ENCODE measurements at regions of chr19 and their contacts with region 1.

Region 1: GRCh38 chr19:58305065-58305931 is at the start of gene ERVK3-1:
- DNase-seq: peak; percentile 98
- ATAC-seq: peak; percentile 98
- H3K4me3 ChIP-seq: peak within 1 kb of the TSS; percentile 39 to 94 (median 88)
- H3K4me3 Mint-ChIP-seq: peak within 1 kb of the TSS; percentile 97
- H3K27ac ChIP-seq: peak within 1 kb of the TSS; percentile 85 to 93
- H3K27ac Mint-ChIP-seq: peak within 1 kb of the TSS; percentile 97
- H3K4me1 ChIP-seq: peaks cover 15 to 18% of the 10 kb centered on the region in 2 donors
- H3K4me1 Mint-ChIP-seq: peaks cover 36% of the 10 kb centered on the region
- H3K27me3 ChIP-seq: no peaks in the 10 kb centered on the region
- H3K27me3 Mint-ChIP-seq: no peaks in the 10 kb centered on the region
- CTCF ChIP-seq: no peak
- total RNA-seq, gene ERVK3-1: 79.0 and 80.2 TPM in 2 replicates

Region 2: GRCh38 chr19:58091251-58091995 is 213.9 kb before region 1 on chr19:
- CTCF ChIA-PET with region 1: no interaction called
- POLR2A ChIA-PET with region 1: no interaction called
- intact Hi-C with region 1: no loop called
- DNase-seq: no peak
- ATAC-seq: no peak
- H3K4me3 ChIP-seq: no peak overlapping the region
- H3K4me3 Mint-ChIP-seq: no peak overlapping the region
- H3K27ac ChIP-seq: no peak overlapping the region
- H3K27ac Mint-ChIP-seq: no peak overlapping the region
- H3K4me1 ChIP-seq: no peaks in the 10 kb centered on the region
- H3K4me1 Mint-ChIP-seq: peaks cover 2% of the 10 kb centered on the region
- H3K27me3 ChIP-seq: no peaks in the 10 kb centered on the region
- H3K27me3 Mint-ChIP-seq: no peaks in the 10 kb centered on the region
- CTCF ChIP-seq: no peak

Region 3: GRCh38 chr19:58228585-58229254 is 76.6 kb before region 1 on chr19 and contains the start of gene ZNF544:
- CTCF ChIA-PET with region 1: interaction called, 4 read pairs
- POLR2A ChIA-PET with region 1: no interaction called
- intact Hi-C with region 1: loop called (anchors 2 kb)
- DNase-seq: peak; percentile 72
- ATAC-seq: peak; percentile 82
- H3K4me3 ChIP-seq: peak within 1 kb of the TSS; percentile 19 to 91 (median 87)
- H3K4me3 Mint-ChIP-seq: peak within 1 kb of the TSS; percentile 97
- H3K27ac ChIP-seq: peak within 1 kb of the TSS; percentile 19 to 73
- H3K27ac Mint-ChIP-seq: peak within 1 kb of the TSS; percentile 91
- H3K4me1 ChIP-seq: peaks cover 11 to 24% of the 10 kb centered on the region in 2 donors
- H3K4me1 Mint-ChIP-seq: peaks cover 29% of the 10 kb centered on the region
- H3K27me3 ChIP-seq: no peaks in the 10 kb centered on the region
- H3K27me3 Mint-ChIP-seq: no peaks in the 10 kb centered on the region
- CTCF ChIP-seq: peak; percentile 22
- total RNA-seq, gene ZNF544: 65.7 and 75.2 TPM in 2 replicates

Region 4: DNA sequence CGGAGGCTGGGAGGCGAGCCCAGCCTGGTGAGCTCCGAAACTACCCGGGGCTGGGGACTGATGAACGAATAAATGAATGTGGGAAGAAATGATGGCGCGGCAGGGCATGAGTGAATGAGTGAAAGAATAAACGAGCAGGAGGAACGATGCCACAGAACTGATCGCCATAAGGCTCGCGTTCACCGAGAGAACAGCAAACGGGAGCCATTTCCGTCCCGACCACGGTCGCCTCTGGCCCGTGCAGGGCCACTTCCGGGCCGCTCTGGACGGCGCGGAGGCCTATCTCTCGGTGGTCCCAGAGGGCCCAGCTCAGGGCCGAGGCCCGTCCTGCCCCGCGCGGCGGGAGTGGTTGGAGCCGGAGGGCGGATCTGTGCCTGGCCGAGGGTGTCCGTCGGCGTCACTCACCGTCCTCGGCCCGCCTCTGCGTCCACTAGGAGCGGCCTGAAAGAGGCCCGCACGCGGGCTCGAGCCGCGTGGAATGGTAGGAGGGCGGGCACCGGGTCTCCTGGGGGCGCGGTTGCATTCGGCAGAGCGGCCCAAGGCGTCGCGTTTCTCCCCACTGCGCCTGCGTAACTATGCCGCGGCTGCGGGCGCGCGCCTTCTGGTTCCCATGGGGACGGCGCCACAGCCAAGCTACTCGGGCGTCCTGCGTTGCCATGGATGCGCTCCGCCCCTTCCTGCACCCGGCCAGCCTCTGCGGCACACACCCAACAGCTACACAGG is 57.1 kb after region 1 on chr19 and contains the start of gene ZNF497:
- CTCF ChIA-PET with region 1: no interaction called
- POLR2A ChIA-PET with region 1: interaction called, 12 read pairs
- intact Hi-C with region 1: loop called (anchors 1 kb)
- DNase-seq: peak; percentile 99
- ATAC-seq: peak; percentile 83
- H3K4me3 ChIP-seq: peak within 1 kb of the TSS; percentile 69 to 90 (median 74)
- H3K4me3 Mint-ChIP-seq: peak within 1 kb of the TSS; percentile 95
- H3K27ac ChIP-seq: peak within 1 kb of the TSS; percentile 80 to 81
- H3K27ac Mint-ChIP-seq: peak within 1 kb of the TSS; percentile 97
- H3K4me1 ChIP-seq: peaks cover 11 to 30% of the 10 kb centered on the region in 2 donors
- H3K4me1 Mint-ChIP-seq: peaks cover 17% of the 10 kb centered on the region
- H3K27me3 ChIP-seq: peaks cover 0 to 13% (median 5%) of the 10 kb centered on the region in 4 experiments
- H3K27me3 Mint-ChIP-seq: peaks cover 3% of the 10 kb centered on the region
- CTCF ChIP-seq: no peak
- total RNA-seq, gene ZNF497: 2.7 and 4.4 TPM in 2 replicates

Region 5: GRCh38 chr19:58400916-58401839 is 95.9 kb after region 1 on chr19:
- CTCF ChIA-PET with region 1: no interaction called
- POLR2A ChIA-PET with region 1: no interaction called
- intact Hi-C with region 1: loop called (anchors 1 kb)
- DNase-seq: peak; percentile 100
- ATAC-seq: peak; percentile 97
- H3K4me3 ChIP-seq: peak overlapping the region; percentile 32 to 69 (median 64)
- H3K4me3 Mint-ChIP-seq: peak overlapping the region; percentile 89
- H3K27ac ChIP-seq: peak overlapping the region; percentile 62 to 87
- H3K27ac Mint-ChIP-seq: peak overlapping the region; percentile 91
- H3K4me1 ChIP-seq: peaks cover 7 to 15% of the 10 kb centered on the region in 2 donors
- H3K4me1 Mint-ChIP-seq: peaks cover 7% of the 10 kb centered on the region
- H3K27me3 ChIP-seq: peaks cover 0 to 19% (median 7%) of the 10 kb centered on the region in 4 experiments
- H3K27me3 Mint-ChIP-seq: peaks cover 3% of the 10 kb centered on the region
- CTCF ChIP-seq: no peak

Region 6: DNA sequence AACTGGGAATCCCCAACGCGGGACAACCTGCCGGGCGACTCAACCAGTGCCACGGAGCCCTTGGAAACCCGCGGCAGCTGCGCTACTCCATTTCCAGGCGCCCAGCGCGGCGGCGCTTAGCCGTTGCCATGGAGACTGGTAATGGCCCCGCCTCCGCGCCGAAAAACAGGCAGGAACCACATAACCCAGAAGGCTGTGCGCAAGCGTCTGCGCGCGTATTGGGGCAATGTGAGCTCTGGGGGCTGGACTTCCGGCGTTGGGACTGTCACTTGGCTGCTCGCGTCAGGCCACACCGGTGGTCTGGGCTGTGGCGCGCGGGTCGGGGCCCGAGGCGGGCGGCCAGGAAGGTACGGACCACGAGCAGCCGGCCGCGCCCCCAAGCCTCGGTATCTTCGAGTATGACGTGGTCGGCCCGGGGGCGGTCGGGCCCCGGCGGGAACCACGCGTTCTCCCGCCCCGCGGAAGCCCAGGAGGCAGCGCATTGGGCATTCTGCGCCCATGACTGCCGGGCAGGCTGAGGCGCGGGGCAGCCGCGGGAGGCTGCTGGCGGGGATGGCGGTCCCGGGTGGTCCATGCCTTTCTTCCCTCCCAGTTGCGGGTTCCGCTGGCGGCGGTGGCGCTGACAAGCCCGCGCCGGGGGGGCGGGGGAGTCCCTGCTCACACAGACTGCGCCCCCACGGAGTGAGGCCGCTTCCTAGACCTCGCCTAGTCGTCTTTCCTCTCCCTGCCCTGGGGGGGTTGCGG is 146.2 kb after region 1 on chr19 and contains the start of gene ZNF324B:
- CTCF ChIA-PET with region 1: no interaction called
- POLR2A ChIA-PET with region 1: no interaction called
- intact Hi-C with region 1: loop called (anchors 1 kb)
- DNase-seq: peak; percentile 97
- ATAC-seq: peak; percentile 97
- H3K4me3 ChIP-seq: peak within 1 kb of the TSS; percentile 55 to 81 (median 73)
- H3K4me3 Mint-ChIP-seq: peak within 1 kb of the TSS; percentile 93
- H3K27ac ChIP-seq: peak within 1 kb of the TSS in 1 of 2 donors; percentile 66
- H3K27ac Mint-ChIP-seq: peak within 1 kb of the TSS; percentile 85
- H3K4me1 ChIP-seq: peaks cover 5 to 12% of the 10 kb centered on the region in 2 donors
- H3K4me1 Mint-ChIP-seq: peaks cover 20% of the 10 kb centered on the region
- H3K27me3 ChIP-seq: peaks cover 0 to 24% (median 2%) of the 10 kb centered on the region in 4 experiments
- H3K27me3 Mint-ChIP-seq: peaks cover 13% of the 10 kb centered on the region
- CTCF ChIP-seq: no peak
- total RNA-seq, gene ZNF324B: 15.0 and 17.4 TPM in 2 replicates

Region 7: DNA sequence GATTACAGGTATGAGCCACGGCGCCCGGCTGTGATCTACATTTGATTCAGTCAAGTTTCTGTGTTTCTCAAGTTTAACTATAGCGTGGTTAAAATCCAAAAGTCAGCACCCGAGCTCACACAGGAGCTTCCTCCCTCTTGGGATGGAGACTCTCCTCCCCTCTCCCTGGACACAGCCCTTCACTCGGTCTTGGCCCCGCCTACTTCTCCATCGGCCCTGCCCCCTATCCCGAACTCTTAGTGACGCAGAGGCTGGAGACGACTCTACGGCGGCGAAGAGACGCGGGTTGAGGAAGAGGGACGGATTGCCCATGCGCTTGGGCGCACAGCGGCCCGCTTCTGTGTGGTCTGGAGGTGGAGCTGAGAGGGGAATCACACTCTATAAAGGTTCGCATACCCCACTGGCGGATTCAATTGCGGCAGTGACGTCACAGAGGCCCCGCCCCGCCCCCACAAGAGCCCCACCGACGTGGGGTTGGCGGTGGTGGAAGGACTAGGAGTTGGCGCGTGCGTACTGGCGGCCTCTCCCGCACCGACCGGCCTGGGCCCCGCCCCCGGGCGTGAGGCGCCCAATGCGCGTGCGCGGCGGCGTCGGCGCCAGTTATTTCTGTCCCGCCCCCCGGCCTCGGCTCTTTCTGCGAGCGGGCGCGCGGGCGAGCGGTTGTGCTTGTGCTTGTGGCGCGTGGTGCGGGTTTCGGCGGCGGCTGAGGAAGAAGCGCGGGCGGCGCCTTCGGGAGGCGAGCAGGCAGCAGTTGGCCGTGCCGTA is 238.7 kb after region 1 on chr19 and contains the start of gene TRIM28:
- CTCF ChIA-PET with region 1: no interaction called
- POLR2A ChIA-PET with region 1: no interaction called
- intact Hi-C with region 1: loop called (anchors 1 kb)
- DNase-seq: peak; percentile 100
- ATAC-seq: peak; percentile 84
- H3K4me3 ChIP-seq: peak within 1 kb of the TSS; percentile 67 to 87 (median 82)
- H3K4me3 Mint-ChIP-seq: peak within 1 kb of the TSS; percentile 97
- H3K27ac ChIP-seq: peak within 1 kb of the TSS; percentile 96
- H3K27ac Mint-ChIP-seq: peak within 1 kb of the TSS; percentile 99
- H3K4me1 ChIP-seq: peaks cover 17 to 31% of the 10 kb centered on the region in 2 donors
- H3K4me1 Mint-ChIP-seq: peaks cover 29% of the 10 kb centered on the region
- H3K27me3 ChIP-seq: peaks cover 0 to 14% (median 0%) of the 10 kb centered on the region in 4 experiments
- H3K27me3 Mint-ChIP-seq: peaks cover 15% of the 10 kb centered on the region
- CTCF ChIP-seq: no peak
- total RNA-seq, gene TRIM28: 370 and 394 TPM in 2 replicates

Measured in B cell (primary cell).